ENCODE measurements at regions of chr3 and their contacts with region 1.

Region 1: GRCh38 chr3:195129644-195130492 is 141.1 kb downstream of the XXYLT1 start:
- DNase-seq: no peak
- ATAC-seq: no peak

Region 2: GRCh38 chr3:195259475-195260279 is 129.8 kb after region 1 on chr3:
- intact Hi-C with region 1: loop called (anchors 10 kb)
- DNase-seq: peak; percentile 93
- ATAC-seq: peak; percentile 91

Region 3: GRCh38 chr3:195271116-195271858 is 141.4 kb after region 1 on chr3 and contains the start of gene XXYLT1:
- intact Hi-C with region 1: no loop called
- DNase-seq: peak; percentile 95
- ATAC-seq: peak; percentile 98
- total RNA-seq, gene XXYLT1: 2.6 TPM